ENCODE measurements at regions of chr12 and their contacts with region 1.

Region 1: DNA sequence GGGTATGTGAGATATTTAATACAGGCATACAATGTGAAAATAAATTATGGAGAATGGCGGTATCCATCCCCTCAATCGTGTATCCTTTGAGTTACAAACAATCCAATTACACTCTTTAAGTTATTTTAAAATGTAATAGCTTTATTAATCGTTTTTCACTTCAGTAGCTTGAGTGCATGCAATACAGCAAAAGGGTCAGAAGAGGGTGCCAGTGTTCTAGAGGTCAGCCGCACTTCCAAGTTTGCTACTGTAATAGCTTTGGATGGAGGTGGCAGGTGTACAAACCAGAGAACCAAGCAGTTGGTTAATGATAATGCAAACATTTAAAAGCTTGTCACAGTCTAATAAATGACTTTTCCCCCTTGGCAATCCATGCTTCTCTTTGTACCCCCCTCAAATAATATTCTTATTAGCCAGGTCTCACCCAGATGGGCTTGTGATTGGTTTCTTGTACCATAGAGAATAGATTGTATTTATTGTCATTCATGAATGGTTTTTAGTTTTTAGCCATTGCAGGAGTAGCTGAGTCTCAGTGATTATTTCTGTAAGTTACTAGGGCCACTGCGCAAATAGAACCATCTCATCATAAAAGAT is 127.0 kb downstream of the ERC1 start:
- DNase-seq: peak in 1 of 2 donors; percentile 79
- H3K4me3 ChIP-seq: no peak overlapping the region
- H3K27ac ChIP-seq: no peak overlapping the region
- H3K4me1 ChIP-seq: no peaks in the 10 kb centered on the region
- H3K27me3 ChIP-seq: no peaks in the 10 kb centered on the region
- CTCF ChIP-seq: peak; percentile 82 to 93 (median 91)

Region 2: GRCh38 chr12:1147821-1148220 is 29.8 kb after region 1 on chr12:
- intact Hi-C with region 1: no loop called
- DNase-seq: no peak
- H3K4me3 ChIP-seq: no peak overlapping the region
- H3K27ac ChIP-seq: no peak overlapping the region
- H3K4me1 ChIP-seq: no peaks in the 10 kb centered on the region
- H3K27me3 ChIP-seq: no peaks in the 10 kb centered on the region
- CTCF ChIP-seq: no peak

Region 3: GRCh38 chr12:1605129-1606020 is 487.3 kb after region 1 on chr12:
- intact Hi-C with region 1: loop called (anchors 1 kb)
- DNase-seq: peak; percentile 32 to 83
- H3K4me3 ChIP-seq: peak overlapping the region; percentile 35 to 60
- H3K27ac ChIP-seq: peak overlapping the region; percentile 66 to 81
- H3K4me1 ChIP-seq: peaks cover 7 to 10% of the 10 kb centered on the region in 2 donors
- H3K27me3 ChIP-seq: no peaks in the 10 kb centered on the region
- CTCF ChIP-seq: peak; percentile 74 to 81 (median 81)